Naive thymus-derived CD4-positive, alpha-beta T cell (primary cell): ENCODE measurements at regions of chr12 and their contacts with region 1.

Region 1: GRCh38 chr12:55817346-55818139 is at the starts of genes ORMDL2 and SARNP:
- DNase-seq: peak; percentile 81 to 99 (median 98)
- ATAC-seq: peak; percentile 96
- H3K4me3 ChIP-seq: peak within 1 kb of the TSS; percentile 94
- H3K4me3 Mint-ChIP-seq: no peak within 1 kb of the TSS
- H3K27ac ChIP-seq: peak within 1 kb of the TSS; percentile 88
- H3K27ac Mint-ChIP-seq: no peak within 1 kb of the TSS
- H3K4me1 ChIP-seq: peaks cover 22 to 41% of the 10 kb centered on the region in 2 donors
- H3K4me1 Mint-ChIP-seq: peaks cover 32 to 45% (median 37%) of the 10 kb centered on the region in 7 donors
- H3K27me3 ChIP-seq: no peaks in the 10 kb centered on the region
- H3K27me3 Mint-ChIP-seq: no peaks in the 10 kb centered on the region
- total RNA-seq, gene ORMDL2: 12.3 to 67.3 (median 40.5) TPM
- total RNA-seq, gene SARNP: 28.0 to 73.0 (median 41.7) TPM

Region 2: GRCh38 chr12:55715833-55716581 is 101.5 kb before region 1 on chr12 and contains the start of gene BLOC1S1:
- CTCF ChIA-PET with region 1: no interaction called
- POLR2A ChIA-PET with region 1: interaction called, 11 read pairs
- intact Hi-C with region 1: loop called in 1 of 2 experiments (anchors 1 kb)
- DNase-seq: peak; percentile 82 to 95 (median 90)
- ATAC-seq: peak; percentile 96
- H3K4me3 ChIP-seq: peak within 1 kb of the TSS; percentile 96
- H3K4me3 Mint-ChIP-seq: peak within 1 kb of the TSS; percentile 83 to 98 (median 94)
- H3K27ac ChIP-seq: peak within 1 kb of the TSS; percentile 92
- H3K27ac Mint-ChIP-seq: peak within 1 kb of the TSS; percentile 91 to 98 (median 97)
- H3K4me1 ChIP-seq: peaks cover 19 to 23% of the 10 kb centered on the region in 2 donors
- H3K4me1 Mint-ChIP-seq: peaks cover 15 to 41% (median 36%) of the 10 kb centered on the region in 7 donors
- H3K27me3 ChIP-seq: no peaks in the 10 kb centered on the region
- H3K27me3 Mint-ChIP-seq: peaks cover 0 to 21% (median 0%) of the 10 kb centered on the region in 5 donors
- total RNA-seq, gene BLOC1S1: 37.6 to 112 (median 71.5) TPM

Region 3: GRCh38 chr12:55743925-55744707 is 73.4 kb before region 1 on chr12:
- CTCF ChIA-PET with region 1: interaction called, 9 read pairs
- POLR2A ChIA-PET with region 1: interaction called, 31 read pairs
- intact Hi-C with region 1: loop called in 1 of 2 experiments (anchors 1 kb)
- DNase-seq: no peak
- ATAC-seq: no peak
- H3K4me3 ChIP-seq: peak overlapping the region; percentile 78
- H3K4me3 Mint-ChIP-seq: peak overlapping the region; percentile 90 to 96 (median 94)
- H3K27ac ChIP-seq: peak overlapping the region; percentile 63
- H3K27ac Mint-ChIP-seq: peak overlapping the region; percentile 65 to 87 (median 83)
- H3K4me1 ChIP-seq: peaks cover 5 to 19% of the 10 kb centered on the region in 2 donors
- H3K4me1 Mint-ChIP-seq: peaks cover 30 to 46% (median 42%) of the 10 kb centered on the region in 7 donors
- H3K27me3 ChIP-seq: no peaks in the 10 kb centered on the region
- H3K27me3 Mint-ChIP-seq: peaks cover 0 to 8% (median 0%) of the 10 kb centered on the region in 5 donors

Region 4: GRCh38 chr12:55829967-55830600 is 12.5 kb after region 1 on chr12:
- CTCF ChIA-PET with region 1: interaction called, 13 read pairs
- POLR2A ChIA-PET with region 1: interaction called, 129 read pairs
- intact Hi-C with region 1: loop called (anchors 1 kb)
- DNase-seq: peak in 5 of 9 donors; percentile 16 to 44 (median 20)
- ATAC-seq: peak; percentile 2
- H3K4me3 ChIP-seq: peak overlapping the region; percentile 99
- H3K4me3 Mint-ChIP-seq: peak overlapping the region; percentile 88 to 99 (median 99)
- H3K27ac ChIP-seq: peak overlapping the region; percentile 84
- H3K27ac Mint-ChIP-seq: peak overlapping the region; percentile 85 to 98 (median 95)
- H3K4me1 ChIP-seq: peaks cover 37 to 40% of the 10 kb centered on the region in 2 donors
- H3K4me1 Mint-ChIP-seq: peaks cover 42 to 69% (median 53%) of the 10 kb centered on the region in 7 donors
- H3K27me3 ChIP-seq: no peaks in the 10 kb centered on the region
- H3K27me3 Mint-ChIP-seq: no peaks in the 10 kb centered on the region

Region 5: DNA sequence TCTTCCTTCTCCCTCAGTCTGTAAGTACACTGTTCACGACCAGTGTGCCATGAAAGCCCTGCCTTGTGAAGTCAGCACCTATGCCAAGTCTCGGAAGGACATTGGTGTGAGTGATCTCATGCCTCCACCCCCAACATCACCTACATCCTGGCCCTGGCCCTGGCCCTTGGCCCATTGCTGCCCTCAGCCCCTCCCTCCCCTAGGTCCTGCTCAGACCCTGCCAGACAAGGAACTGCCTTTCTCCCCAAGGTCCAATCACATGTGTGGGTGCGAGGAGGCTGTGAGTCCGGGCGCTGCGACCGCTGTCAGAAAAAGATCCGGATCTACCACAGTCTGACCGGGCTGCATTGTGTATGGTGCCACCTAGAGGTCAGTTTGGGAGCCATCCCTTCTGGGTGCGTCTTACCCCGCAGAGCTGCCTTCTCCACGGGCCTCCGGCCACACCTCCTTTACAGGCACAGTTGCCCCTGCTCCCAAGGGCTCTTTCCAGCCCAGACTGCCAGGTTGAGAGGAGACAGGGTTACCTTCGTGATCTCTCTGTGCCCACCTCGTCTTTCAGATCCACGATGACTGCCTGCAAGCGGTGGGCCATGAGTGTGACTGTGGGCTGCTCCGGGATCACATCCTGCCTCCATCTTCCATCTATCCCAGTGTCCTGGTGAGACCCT is 122.7 kb after region 1 on chr12:
- CTCF ChIA-PET with region 1: interaction called, 43 read pairs
- POLR2A ChIA-PET with region 1: interaction called, 243 read pairs
- intact Hi-C with region 1: loop called (anchors 1 kb)
- DNase-seq: peak; percentile 62 to 88 (median 82)
- ATAC-seq: peak; percentile 98
- H3K4me3 ChIP-seq: no peak overlapping the region
- H3K4me3 Mint-ChIP-seq: peak overlapping the region; percentile 57 to 99 (median 72)
- H3K27ac ChIP-seq: peak overlapping the region; percentile 64
- H3K27ac Mint-ChIP-seq: peak overlapping the region; percentile 55 to 100 (median 97)
- H3K4me1 ChIP-seq: peaks cover 16 to 63% of the 10 kb centered on the region in 2 donors
- H3K4me1 Mint-ChIP-seq: peaks cover 65 to 98% (median 93%) of the 10 kb centered on the region in 7 donors
- H3K27me3 ChIP-seq: no peaks in the 10 kb centered on the region
- H3K27me3 Mint-ChIP-seq: no peaks in the 10 kb centered on the region

Region 6: GRCh38 chr12:55955800-55956508 is 138.4 kb after region 1 on chr12:
- CTCF ChIA-PET with region 1: no interaction called
- POLR2A ChIA-PET with region 1: interaction called, 21 read pairs
- intact Hi-C with region 1: no loop called
- DNase-seq: peak in 4 of 9 donors; percentile 41 to 47 (median 44)
- ATAC-seq: peak; percentile 71
- H3K4me3 ChIP-seq: no peak overlapping the region
- H3K4me3 Mint-ChIP-seq: peak overlapping the region in 1 of 10 donors; percentile 21
- H3K27ac ChIP-seq: peak overlapping the region; percentile 22
- H3K27ac Mint-ChIP-seq: peak overlapping the region; percentile 6 to 90 (median 78)
- H3K4me1 ChIP-seq: peaks cover 4 to 8% of the 10 kb centered on the region in 2 donors
- H3K4me1 Mint-ChIP-seq: peaks cover 12 to 38% (median 21%) of the 10 kb centered on the region in 7 donors
- H3K27me3 ChIP-seq: no peaks in the 10 kb centered on the region
- H3K27me3 Mint-ChIP-seq: no peaks in the 10 kb centered on the region

Region 7: GRCh38 chr12:56315622-56316473 is 498.3 kb after region 1 on chr12 and contains the start of gene CNPY2:
- CTCF ChIA-PET with region 1: no interaction called
- POLR2A ChIA-PET with region 1: no interaction called
- intact Hi-C with region 1: no loop called
- DNase-seq: peak; percentile 83 to 94 (median 92)
- ATAC-seq: peak; percentile 93
- H3K4me3 ChIP-seq: peak within 1 kb of the TSS; percentile 100
- H3K4me3 Mint-ChIP-seq: peak within 1 kb of the TSS; percentile 96 to 99 (median 98)
- H3K27ac ChIP-seq: peak within 1 kb of the TSS; percentile 97
- H3K27ac Mint-ChIP-seq: peak within 1 kb of the TSS; percentile 93 to 99 (median 99)
- H3K4me1 ChIP-seq: peaks cover 13 to 16% of the 10 kb centered on the region in 2 donors
- H3K4me1 Mint-ChIP-seq: peaks cover 5 to 23% (median 13%) of the 10 kb centered on the region in 7 donors
- H3K27me3 ChIP-seq: no peaks in the 10 kb centered on the region
- H3K27me3 Mint-ChIP-seq: no peaks in the 10 kb centered on the region
- total RNA-seq, gene CNPY2: 48.4 to 134 (median 87.6) TPM